ENCODE measurements at regions of chr18 and their contacts with region 1.

Region 1: GRCh38 chr18:58768293-58768974 is 96.2 kb upstream of the ZNF532 start:
- DNase-seq: peak; percentile 60 to 83 (median 70)
- H3K4me3 ChIP-seq: peak overlapping the region; percentile 24
- H3K27ac ChIP-seq: no peak overlapping the region
- H3K4me1 ChIP-seq: peaks cover 3% of the 10 kb centered on the region
- H3K27me3 ChIP-seq: no peaks in the 10 kb centered on the region
- CTCF ChIP-seq: peak; percentile 38 to 63 (median 43)
- EP300 ChIP-seq: no peak
- POLR2A ChIP-seq: no peak

Region 2: DNA sequence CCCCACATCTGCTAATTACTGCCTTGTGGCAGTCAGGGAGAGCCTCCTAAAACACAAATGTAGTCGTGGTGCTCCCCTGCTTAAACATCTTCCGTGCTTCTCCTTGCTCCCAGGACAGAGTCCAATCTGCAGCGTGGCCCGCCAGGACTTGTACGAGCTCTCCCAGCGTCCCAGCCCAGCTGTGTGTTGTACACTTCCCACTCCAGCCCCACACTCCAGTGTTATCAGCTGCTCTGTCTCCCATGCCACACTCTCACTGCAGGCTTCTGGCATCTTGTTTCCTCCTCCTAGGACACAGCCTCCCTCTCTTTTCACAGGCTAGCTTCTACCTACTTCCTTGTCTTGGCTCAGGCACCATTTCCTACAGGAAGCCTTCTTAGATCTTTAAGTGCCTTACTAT is 339.0 kb before region 1 on chr18:
- intact Hi-C with region 1: no loop called
- DNase-seq: no peak
- H3K4me3 ChIP-seq: no peak overlapping the region
- H3K27ac ChIP-seq: no peak overlapping the region
- H3K4me1 ChIP-seq: no peaks in the 10 kb centered on the region
- H3K27me3 ChIP-seq: no peaks in the 10 kb centered on the region
- CTCF ChIP-seq: no peak
- EP300 ChIP-seq: no peak
- POLR2A ChIP-seq: no peak

Region 3: GRCh38 chr18:58960946-58961722 is 192.7 kb after region 1 on chr18:
- intact Hi-C with region 1: no loop called
- DNase-seq: no peak
- H3K4me3 ChIP-seq: no peak overlapping the region
- H3K27ac ChIP-seq: no peak overlapping the region
- H3K4me1 ChIP-seq: no peaks in the 10 kb centered on the region
- H3K27me3 ChIP-seq: no peaks in the 10 kb centered on the region
- CTCF ChIP-seq: no peak
- EP300 ChIP-seq: no peak
- POLR2A ChIP-seq: no peak

Region 4: GRCh38 chr18:59070181-59070912 is 301.9 kb after region 1 on chr18:
- intact Hi-C with region 1: loop called in 1 of 4 experiments (anchors 5 kb)
- DNase-seq: peak; percentile 73 to 90 (median 86)
- H3K4me3 ChIP-seq: no peak overlapping the region
- H3K27ac ChIP-seq: no peak overlapping the region
- H3K4me1 ChIP-seq: peaks cover 2% of the 10 kb centered on the region
- H3K27me3 ChIP-seq: no peaks in the 10 kb centered on the region
- CTCF ChIP-seq: peak; percentile 73 to 86 (median 83)
- EP300 ChIP-seq: no peak
- POLR2A ChIP-seq: no peak